ENCODE measurements at regions of chr19 and their contacts with region 1.

Region 1: DNA sequence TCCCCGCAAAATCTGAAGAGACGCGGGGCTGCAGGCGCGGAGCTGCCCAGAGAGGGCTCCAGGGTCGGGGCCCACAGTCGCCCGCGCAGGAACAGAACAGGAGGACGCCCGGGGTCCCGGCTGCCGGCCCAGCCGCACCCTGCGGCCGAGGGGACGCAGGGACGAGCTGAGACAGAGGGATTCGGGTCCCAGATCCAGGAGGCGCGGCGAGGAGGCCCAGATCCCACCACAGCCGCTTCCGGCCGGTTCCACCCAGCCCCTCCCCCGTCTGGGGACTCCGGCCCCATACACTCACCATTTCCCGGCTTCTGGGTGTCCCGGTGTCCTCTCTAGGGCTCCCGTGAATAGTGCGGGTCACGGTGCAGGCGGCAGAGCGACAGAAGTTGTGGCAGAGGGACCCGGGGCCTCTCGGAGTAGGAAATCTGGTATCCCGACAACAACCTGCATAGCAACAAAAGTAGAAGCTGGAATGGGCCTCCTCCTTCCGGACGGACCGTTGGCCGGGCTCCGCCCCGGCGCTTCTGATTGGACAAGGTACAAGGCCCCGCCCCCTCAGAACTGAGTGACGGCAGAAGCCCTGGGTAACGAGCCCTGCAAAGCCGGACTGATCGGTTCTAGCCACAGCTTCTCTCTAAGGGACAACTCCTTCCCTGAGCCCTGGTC is at the start of gene ZNF20:
- DNase-seq: peak; percentile 98
- H3K4me3 ChIP-seq: peak within 1 kb of the TSS; percentile 87 to 98 (median 92)
- H3K27ac ChIP-seq: peak within 1 kb of the TSS; percentile 42 to 89 (median 82)
- H3K4me1 ChIP-seq: peaks cover 19 to 43% (median 26%) of the 10 kb centered on the region in 6 donors
- H3K27me3 ChIP-seq: no peaks in the 10 kb centered on the region
- CTCF ChIP-seq: peak in 1 of 11 experiments; percentile 42
- POLR2A ChIP-seq: no peak
- total RNA-seq, gene ZNF20: 3.1 to 5.5 (median 4.1) TPM

Region 2: DNA sequence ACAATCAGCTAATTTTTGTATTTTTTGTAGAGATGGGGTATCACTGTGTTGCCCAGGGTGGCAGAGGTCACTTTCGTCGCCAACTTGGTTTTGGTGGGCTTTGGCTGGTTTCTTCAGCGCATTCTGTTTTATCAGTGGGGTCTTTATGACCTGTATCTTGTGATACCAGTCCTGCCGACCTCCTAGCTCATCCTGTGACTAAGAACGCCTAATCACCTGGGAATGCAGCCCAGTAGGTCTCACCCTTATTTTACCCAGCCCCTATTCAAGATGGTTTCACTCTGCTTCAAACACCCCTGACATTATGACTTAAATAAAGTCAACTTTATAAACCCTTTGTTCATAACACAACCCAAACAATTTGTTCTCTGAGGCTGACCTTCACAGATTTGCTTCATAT is 84.2 kb before region 1 on chr19:
- intact Hi-C with region 1: loop called (anchors 2 kb)
- DNase-seq: no peak
- H3K4me3 ChIP-seq: no peak overlapping the region
- H3K27ac ChIP-seq: no peak overlapping the region
- H3K4me1 ChIP-seq: peaks cover 4 to 35% (median 20%) of the 10 kb centered on the region in 6 donors
- H3K27me3 ChIP-seq: peaks cover 0 to 30% (median 0%) of the 10 kb centered on the region in 7 donors
- CTCF ChIP-seq: no peak
- POLR2A ChIP-seq: no peak

Measured in spleen (tissue), 13 donors.